ENCODE measurements at regions of chr3 and their contacts with region 1.

Region 1: DNA sequence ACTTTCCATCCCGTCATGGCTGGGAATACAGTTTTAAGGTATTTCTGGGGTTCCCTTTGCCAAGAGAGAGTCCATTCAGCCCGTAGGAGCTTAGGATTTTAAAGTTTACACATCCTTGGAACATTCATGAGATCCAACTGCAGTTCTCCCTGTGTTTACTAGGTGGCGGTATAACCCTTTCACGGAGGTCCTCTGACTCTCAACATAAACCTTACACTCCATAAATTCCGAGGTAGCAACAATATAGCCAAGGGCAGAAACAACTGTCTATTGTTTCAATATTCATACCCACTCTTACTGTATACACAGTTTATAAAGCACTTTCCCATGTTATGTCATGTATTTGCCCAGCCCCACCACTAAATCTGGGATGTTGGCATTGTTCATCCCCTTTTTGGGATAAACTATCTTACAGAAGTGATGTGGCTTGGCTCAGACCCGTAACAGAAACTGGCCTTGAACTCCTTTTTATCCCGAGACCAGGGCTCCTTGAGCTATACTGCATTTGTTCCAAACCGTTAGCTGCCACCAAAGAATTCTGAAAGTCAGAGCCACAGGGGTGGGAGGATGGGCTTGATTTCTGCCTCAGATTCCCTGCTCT is 69.2 kb upstream of the COL6A5 start:
- DNase-seq: peak; percentile 61
- ATAC-seq: peak; percentile 96
- H3K4me3 ChIP-seq: no peak overlapping the region
- H3K27ac ChIP-seq: no peak overlapping the region
- H3K4me1 ChIP-seq: no peaks in the 10 kb centered on the region
- H3K27me3 ChIP-seq: no peaks in the 10 kb centered on the region
- CTCF ChIP-seq: peak; percentile 85
- POLR2A ChIP-seq: no peak
- RAD21 ChIP-seq: peak; percentile 76

Region 2: DNA sequence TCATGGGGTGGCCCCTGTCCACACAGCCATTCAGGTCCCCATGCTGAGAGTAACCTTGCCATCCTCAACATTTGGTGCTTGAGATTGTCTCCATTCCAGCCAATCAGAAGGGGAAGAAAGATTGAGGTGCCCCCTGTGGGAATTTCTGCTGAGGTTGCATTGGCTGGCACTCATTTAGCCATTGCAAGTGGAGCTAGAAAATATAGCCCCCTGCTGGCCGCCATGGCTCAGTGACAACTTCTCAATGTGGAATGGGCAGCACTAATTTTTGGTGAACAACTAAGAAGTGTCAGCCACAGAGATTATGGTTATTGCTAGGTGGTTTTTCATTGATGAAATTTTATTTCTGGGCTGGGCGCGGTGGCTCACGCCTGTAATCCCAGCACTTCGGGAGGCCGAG is 262.7 kb after region 1 on chr3:
- CTCF ChIA-PET with region 1: no interaction called
- POLR2A ChIA-PET with region 1: no interaction called
- dilution Hi-C with region 1: no loop called
- in situ Hi-C with region 1: no loop called
- intact Hi-C with region 1: loop called (anchors 1 kb)
- DNase-seq: peak; percentile 17
- ATAC-seq: peak; percentile 72; the same call in 1 of the 2 replicates
- H3K4me3 ChIP-seq: no peak overlapping the region
- H3K27ac ChIP-seq: no peak overlapping the region
- H3K4me1 ChIP-seq: no peaks in the 10 kb centered on the region
- H3K27me3 ChIP-seq: no peaks in the 10 kb centered on the region
- CTCF ChIP-seq: peak; percentile 49
- POLR2A ChIP-seq: no peak
- RAD21 ChIP-seq: 0 out of 2 replicates have a peak, but pooled peaks have one; percentile 33

Region 3: GRCh38 chr3:130759699-130760338 is 483.5 kb after region 1 on chr3:
- CTCF ChIA-PET with region 1: no interaction called
- POLR2A ChIA-PET with region 1: no interaction called
- dilution Hi-C with region 1: no loop called
- in situ Hi-C with region 1: no loop called
- intact Hi-C with region 1: loop called (anchors 2 kb)
- DNase-seq: peak; percentile 49
- ATAC-seq: peak; percentile 92
- H3K4me3 ChIP-seq: no peak overlapping the region
- H3K27ac ChIP-seq: no peak overlapping the region
- H3K4me1 ChIP-seq: no peaks in the 10 kb centered on the region
- H3K27me3 ChIP-seq: peaks cover 2% of the 10 kb centered on the region; the same call in 1 of the 2 replicates
- CTCF ChIP-seq: peak; percentile 76
- POLR2A ChIP-seq: no peak
- RAD21 ChIP-seq: peak; percentile 72

Measured in IMR-90 (cell line).